ENCODE measurements at regions of chr10 and their contacts with region 1.

Region 1: DNA sequence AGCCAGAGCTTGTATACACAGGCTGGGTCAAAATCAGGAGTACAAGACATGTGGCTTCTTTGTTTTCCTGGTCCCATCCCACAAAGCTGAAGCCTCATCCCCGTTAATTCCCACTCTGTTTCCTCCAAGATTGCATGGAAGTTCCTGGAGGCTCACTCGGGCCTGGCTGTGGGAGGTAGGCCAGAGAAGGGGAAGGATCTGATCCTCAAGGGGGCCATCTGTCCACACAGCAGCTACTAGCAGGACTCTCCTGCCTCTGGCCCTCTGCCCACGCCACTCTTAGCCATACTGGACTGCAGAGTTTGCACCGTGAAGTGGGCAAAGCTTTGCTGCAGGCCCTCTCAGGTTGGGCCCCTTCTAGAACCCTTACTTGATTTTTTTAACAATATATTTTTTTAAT is 160.6 kb downstream of the FGFR2 start:
- DNase-seq: peak in 9 of 10 donors; percentile 8 to 64 (median 57)
- H3K4me3 ChIP-seq: no peak overlapping the region
- H3K27ac ChIP-seq: peak overlapping the region in 58 of 59 donors; percentile 45 to 94 (median 83)
- H3K27me3 ChIP-seq: no peaks in the 10 kb centered on the region
- CTCF ChIP-seq: peak in 4 of 56 donors; percentile 9 to 29 (median 22)

Region 2: DNA sequence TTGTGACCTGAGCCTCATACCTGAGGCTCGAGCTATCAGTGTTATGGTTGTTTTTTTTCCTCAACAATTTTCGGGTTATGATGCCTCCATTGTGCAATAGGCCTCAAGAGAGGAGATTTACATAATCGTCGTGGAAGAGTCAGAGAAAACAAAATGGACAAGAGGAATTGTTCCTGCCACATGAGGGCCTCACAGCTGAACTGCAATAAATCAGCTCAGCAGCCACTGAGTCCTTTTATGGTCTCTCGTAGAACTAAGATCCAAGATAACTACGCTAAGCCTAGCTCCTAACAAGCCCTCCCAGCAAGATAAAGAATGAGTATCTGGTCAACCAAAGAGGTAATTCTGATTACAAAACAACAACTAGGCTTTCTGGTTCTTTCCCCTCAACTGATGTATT is 249.6 kb before region 1 on chr10:
- intact Hi-C with region 1: loop called in 1 of 2 experiments (anchors 10 kb)
- DNase-seq: peak in 2 of 10 donors; percentile 41 to 48
- H3K4me3 ChIP-seq: no peak overlapping the region
- H3K27ac ChIP-seq: peak overlapping the region in 46 of 59 donors; percentile 1 to 89 (median 79)
- H3K27me3 ChIP-seq: no peaks in the 10 kb centered on the region
- CTCF ChIP-seq: peak in 52 of 56 donors; percentile 16 to 67 (median 42)

Region 3: DNA sequence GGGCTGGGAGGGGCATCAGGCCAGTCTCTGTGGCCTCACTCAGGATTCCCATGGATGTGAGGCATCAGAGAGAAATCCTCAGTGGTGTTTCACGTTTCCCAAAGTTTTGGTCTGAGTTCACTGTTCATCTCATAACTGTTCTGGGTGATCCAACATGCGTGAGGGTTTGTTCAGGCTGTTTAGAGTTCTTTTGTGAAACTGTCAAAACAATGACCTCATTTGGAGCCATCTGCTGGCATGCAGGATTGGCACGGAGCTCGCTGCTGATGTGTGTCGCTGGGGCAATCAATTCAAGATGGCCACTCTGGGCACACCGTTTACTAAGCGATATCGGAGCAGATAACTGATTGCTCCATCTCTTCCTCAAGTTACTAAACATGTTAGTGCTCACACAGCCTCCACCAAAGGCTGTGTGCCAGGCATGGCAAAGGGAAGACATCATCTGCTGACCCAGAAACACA is 220.8 kb before region 1 on chr10:
- intact Hi-C with region 1: loop called (anchors 2 to 10 kb)
- DNase-seq: peak; percentile 5 to 87 (median 76)
- H3K4me3 ChIP-seq: peak overlapping the region in 2 of 59 donors; percentile 8 to 19
- H3K27ac ChIP-seq: peak overlapping the region; percentile 59 to 97 (median 91)
- H3K27me3 ChIP-seq: peaks cover 0 to 6% (median 0%) of the 10 kb centered on the region in 45 donors
- CTCF ChIP-seq: peak in 10 of 56 donors; percentile 5 to 42 (median 26)

Region 4: DNA sequence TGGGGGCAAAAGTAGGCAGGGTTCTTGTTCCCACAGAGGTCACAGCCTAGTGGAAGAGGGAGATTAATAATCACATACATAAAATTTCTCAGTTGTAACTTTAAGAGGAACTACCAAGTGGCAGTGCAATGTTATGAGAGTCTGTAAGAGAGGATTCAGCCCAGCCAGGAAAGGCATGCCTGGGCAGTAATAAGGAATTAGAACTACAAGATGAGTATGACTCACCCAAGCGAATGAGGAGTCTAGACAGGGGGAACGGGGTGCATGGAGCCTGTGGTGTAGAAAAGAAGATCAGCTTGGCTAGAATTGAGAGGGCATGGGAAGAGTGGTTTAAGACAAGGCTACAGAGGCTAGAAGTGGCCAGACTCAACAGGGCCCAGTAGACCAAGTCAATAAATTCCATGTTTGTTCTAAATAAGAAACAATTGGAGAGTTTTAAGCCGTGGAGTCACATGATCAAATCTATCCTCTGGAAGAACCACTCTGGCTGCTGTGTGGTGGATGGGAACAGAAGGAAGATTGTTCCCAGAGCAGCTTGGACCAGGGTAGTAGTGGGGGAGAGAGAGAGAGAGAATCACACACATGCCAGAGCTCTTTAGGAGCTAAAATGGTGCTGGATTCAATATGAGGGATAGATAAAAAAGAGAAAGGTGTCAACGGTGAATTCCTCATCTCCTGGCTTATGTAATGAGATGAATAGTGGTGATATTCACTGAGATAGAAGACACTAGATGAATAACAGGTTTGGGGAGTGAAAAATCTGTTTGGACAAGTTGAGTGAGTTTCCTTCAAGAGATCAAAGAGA is 104.6 kb before region 1 on chr10:
- intact Hi-C with region 1: loop called in 1 of 2 experiments (anchors 10 kb)
- DNase-seq: peak in 1 of 10 donors; percentile 14
- H3K4me3 ChIP-seq: no peak overlapping the region
- H3K27ac ChIP-seq: peak overlapping the region in 30 of 59 donors; percentile 1 to 87 (median 54)
- H3K27me3 ChIP-seq: peaks cover 0 to 3% (median 0%) of the 10 kb centered on the region in 45 donors
- CTCF ChIP-seq: no peak

Region 5: GRCh38 chr10:121481196-121481595 is 43.6 kb after region 1 on chr10:
- intact Hi-C with region 1: loop called in 1 of 2 experiments (anchors 2 kb)
- DNase-seq: no peak
- H3K4me3 ChIP-seq: no peak overlapping the region
- H3K27ac ChIP-seq: peak overlapping the region in 39 of 59 donors; percentile 0 to 92 (median 47)
- H3K27me3 ChIP-seq: peaks cover 0 to 4% (median 0%) of the 10 kb centered on the region in 45 donors
- CTCF ChIP-seq: no peak

Region 6: GRCh38 chr10:121527666-121528065 is 90.1 kb after region 1 on chr10:
- intact Hi-C with region 1: loop called in 1 of 2 experiments (anchors 5 kb)
- DNase-seq: no peak
- H3K4me3 ChIP-seq: peak overlapping the region in 1 of 59 donors; percentile 7
- H3K27ac ChIP-seq: peak overlapping the region; percentile 82 to 100 (median 97)
- H3K27me3 ChIP-seq: no peaks in the 10 kb centered on the region
- CTCF ChIP-seq: no peak